BJ (cell line): ENCODE measurements at regions of chr3 and their contacts with region 1.

Region 1: DNA sequence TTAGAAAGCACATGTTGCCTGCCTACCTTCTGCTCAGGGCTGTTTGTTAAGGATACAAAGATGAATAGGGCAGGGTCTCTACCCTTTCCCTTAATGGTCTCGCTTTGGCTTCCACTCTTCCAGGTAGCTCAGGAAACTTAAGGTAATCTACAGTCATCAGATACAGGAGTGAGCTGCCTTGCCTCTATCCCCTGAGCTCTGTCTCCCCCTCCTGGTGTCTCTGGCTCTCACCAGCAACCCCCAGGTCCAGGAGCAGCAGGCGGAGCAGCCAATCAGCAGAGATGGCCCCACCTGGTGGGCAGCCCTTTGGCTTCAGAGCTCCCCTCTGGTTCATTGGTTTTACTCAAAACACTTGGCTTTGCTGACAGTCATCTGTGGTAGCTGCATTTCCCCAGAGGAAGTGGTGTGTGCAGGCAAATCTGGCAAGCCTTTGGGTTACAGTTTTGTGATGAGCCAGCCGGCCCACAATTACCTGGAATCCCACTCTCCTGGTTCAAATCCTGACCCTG is 8.5 kb upstream of the CX3CR1 start:
- DNase-seq: no peak
- H3K4me3 ChIP-seq: no peak overlapping the region
- H3K27me3 ChIP-seq: no peaks in the 10 kb centered on the region
- CTCF ChIP-seq: peak; percentile 95

Region 2: DNA sequence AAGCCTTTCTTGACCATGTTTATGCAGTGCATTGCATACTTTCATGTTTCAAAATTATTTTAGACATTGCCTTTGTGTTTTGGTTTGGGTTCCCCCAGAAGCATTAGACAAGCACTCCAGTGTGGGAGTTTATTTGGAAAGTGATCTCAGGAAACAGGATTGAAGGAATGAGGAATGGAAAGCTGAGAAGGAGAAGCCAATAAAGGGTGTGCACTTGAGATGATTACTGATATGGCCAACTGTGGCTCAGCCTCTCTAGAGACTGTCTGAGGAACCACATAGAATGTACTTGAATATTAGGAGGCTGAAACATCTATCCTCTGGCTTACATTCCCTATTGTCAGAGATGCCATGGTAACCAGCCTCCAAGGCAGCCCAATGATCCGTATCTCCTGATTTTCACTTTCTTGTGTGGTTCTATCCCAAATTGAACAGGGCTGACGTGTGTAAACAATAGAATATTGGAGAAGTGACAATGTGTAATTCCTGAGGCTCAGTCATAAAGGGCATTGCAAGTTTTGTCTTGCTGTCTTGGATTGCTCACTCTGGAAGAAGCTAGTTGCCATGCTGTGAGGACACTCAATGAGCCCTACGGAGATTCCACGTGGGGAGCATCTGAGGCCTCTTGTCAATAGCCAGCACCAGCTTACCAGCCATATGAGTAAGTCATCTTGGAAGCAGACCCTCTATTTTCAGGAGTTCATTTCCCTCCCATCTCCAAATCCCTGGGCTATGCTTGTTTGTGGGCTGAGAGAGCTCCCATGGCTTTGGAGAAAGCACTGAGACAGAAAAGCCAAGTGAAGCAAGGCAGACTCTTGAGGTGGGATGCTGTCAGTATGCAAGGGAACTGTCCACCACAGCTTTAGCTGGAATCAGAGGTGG is 321.3 kb before region 1 on chr3:
- CTCF ChIA-PET with region 1: no interaction called
- POLR2A ChIA-PET with region 1: no interaction called
- DNase-seq: no peak
- H3K4me3 ChIP-seq: no peak overlapping the region
- H3K27me3 ChIP-seq: peaks cover 2% of the 10 kb centered on the region
- CTCF ChIP-seq: no peak

Region 3: DNA sequence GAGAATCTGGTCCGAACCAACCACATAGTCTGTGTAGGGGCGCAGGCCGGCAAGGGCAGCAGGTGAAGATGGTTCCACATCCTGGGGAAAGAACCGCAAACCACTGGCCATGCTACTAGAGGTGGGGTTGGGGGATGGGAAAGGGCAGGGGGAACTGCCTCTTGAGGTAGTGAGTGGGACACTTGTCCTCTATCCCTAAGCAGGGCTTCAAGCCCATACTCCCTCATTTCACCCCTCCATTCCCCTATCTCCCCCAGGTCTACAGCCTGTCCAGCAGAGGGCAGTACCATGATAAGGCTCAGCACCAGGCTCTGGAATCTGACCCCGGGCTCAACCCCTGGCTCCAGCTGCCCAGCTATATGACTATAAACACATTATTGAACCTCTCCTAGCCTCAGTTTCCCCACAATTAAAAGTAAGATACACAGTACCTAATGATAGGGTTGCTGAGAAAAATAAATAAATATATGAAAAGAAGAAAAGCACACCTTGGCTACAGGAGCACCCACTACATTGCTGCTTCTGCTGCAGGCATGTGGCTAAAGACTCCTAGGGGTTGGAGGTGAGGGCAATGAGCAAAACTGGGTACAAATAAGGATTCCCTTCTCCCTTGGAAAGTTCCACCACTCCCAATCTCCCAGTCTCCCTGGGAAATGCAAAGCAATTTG is 187.2 kb before region 1 on chr3:
- CTCF ChIA-PET with region 1: interaction called, 15 read pairs
- POLR2A ChIA-PET with region 1: no interaction called
- DNase-seq: no peak
- H3K4me3 ChIP-seq: no peak overlapping the region
- H3K27me3 ChIP-seq: no peaks in the 10 kb centered on the region
- CTCF ChIP-seq: peak; percentile 78

Region 4: GRCh38 chr3:39126532-39127071 is 161.8 kb before region 1 on chr3:
- CTCF ChIA-PET with region 1: interaction called, 300 read pairs
- POLR2A ChIA-PET with region 1: no interaction called
- DNase-seq: no peak
- H3K4me3 ChIP-seq: no peak overlapping the region
- H3K27me3 ChIP-seq: no peaks in the 10 kb centered on the region
- CTCF ChIP-seq: peak; percentile 63

Region 5: DNA sequence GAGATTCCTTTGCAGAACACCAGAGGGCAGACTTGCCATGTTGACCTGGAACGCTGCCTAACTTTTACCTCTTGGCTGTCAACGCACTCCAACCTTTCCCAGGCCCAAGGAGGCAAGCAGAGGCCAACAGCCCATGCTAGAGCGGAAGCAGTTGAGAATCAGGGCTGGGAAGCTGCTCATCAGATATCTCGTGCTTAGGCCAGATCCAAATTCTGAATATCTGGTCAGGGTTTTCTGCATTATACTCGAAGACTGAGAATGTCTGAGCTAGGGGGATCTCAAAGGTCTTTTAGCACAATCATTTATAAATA is 98.4 kb before region 1 on chr3:
- CTCF ChIA-PET with region 1: interaction called, 374 read pairs
- POLR2A ChIA-PET with region 1: no interaction called
- DNase-seq: no peak
- H3K4me3 ChIP-seq: no peak overlapping the region
- H3K27me3 ChIP-seq: no peaks in the 10 kb centered on the region
- CTCF ChIP-seq: peak; percentile 77

Region 6: DNA sequence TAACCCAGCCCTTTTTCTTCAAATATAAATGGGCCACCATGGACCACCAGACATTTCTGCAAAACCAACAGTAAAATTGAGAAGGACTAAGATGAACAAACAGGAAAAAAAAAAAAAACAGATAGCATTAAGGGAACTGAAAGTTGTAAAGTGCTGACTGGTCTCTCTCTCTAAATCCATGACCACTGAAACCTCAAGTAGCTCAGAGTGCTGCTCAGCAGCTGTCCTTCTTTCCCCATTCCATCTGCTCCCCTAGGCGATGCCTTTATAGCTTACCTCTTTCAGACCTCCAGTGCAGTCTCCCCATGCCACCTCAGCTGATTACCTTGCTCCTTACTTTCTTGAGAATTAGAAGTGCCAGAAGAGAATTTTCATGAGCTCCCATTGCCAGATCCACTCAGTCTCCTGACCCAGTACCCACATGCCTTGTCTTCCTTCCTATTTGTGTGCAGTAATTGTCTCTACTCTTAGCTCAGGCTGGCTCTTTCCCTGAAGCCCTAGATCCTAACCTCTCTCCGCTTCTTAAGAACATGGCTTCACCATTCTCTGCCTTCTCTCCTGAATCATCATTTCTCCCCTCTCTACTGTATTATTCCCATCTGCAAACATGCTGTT is 72.1 kb before region 1 on chr3:
- CTCF ChIA-PET with region 1: interaction called, 124 read pairs
- POLR2A ChIA-PET with region 1: no interaction called
- DNase-seq: no peak
- H3K4me3 ChIP-seq: no peak overlapping the region
- H3K27me3 ChIP-seq: peaks cover 8% of the 10 kb centered on the region
- CTCF ChIP-seq: no peak

Region 7: DNA sequence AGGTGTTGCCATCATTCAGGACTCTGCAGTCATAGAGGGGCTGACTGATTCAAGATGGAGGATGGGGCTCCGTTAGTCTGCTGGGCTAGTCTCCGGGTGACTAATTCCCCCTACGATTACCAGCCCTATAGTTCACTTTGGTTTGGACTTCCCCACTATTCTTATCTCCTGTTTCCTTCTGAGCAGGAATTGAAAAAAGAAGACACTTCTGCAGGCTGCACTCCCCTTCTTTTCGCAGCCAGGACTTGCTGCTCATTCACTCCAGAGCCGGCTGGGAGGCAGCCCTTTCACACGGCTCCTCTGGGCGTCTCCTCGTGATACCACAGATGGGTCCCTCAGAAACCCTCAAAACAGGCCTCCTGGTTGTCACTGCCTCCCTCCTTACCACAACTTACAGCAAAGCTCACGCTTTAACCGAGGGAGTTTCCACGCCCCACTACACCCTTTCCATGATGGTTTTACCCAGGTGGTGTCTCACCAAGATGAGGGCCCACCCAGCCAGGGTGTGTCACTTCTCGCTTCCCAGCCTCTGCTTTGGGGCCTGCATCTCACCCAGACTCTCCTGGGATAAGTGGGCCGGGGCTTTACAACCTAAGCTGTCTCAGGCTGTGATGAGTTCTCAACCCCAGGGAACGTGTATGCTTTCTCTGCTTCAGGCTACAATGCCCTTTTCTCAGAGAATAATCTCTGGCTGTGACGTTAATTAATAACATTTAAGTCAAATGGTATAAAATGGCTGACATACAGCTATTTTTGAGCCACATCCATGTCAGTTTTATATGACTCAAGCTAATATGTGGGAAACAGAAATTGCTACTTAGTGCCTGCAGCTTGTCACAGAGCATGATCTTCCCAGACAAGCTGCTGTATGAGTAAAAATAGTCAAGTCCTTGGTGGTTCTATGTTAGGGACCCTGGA is 20.5 kb before region 1 on chr3:
- CTCF ChIA-PET with region 1: interaction called, 62 read pairs
- POLR2A ChIA-PET with region 1: no interaction called
- DNase-seq: no peak
- H3K4me3 ChIP-seq: no peak overlapping the region
- H3K27me3 ChIP-seq: peaks cover 16% of the 10 kb centered on the region
- CTCF ChIP-seq: no peak

Region 8: DNA sequence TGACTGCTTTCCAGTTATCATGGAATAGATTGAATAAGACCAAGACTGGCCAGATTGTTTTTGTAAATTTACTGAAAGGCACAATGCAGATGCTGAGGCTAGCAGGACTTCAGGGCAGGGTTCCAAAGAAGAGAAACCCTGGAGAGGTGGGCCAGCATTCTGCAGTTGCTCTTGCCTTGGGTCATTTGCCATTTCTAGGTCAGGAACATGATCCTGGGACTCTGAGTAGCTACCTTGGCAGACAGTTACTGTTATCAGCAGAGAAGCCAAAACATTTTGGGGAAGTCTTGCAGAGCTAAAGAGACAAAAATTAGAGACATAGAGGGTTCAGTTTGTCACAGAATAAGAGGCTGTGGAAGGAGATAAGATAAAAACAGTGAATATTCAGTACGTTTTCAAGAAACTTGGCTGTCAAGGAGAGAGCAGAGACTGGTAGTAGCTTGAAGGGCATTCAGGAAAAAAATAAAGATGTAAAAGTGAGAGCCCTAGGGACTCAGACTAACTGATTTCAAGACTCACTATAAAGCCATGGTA is 474.2 kb after region 1 on chr3:
- CTCF ChIA-PET with region 1: no interaction called
- POLR2A ChIA-PET with region 1: no interaction called
- DNase-seq: no peak
- H3K4me3 ChIP-seq: no peak overlapping the region
- H3K27me3 ChIP-seq: no peaks in the 10 kb centered on the region
- CTCF ChIP-seq: no peak

Region 9: GRCh38 chr3:39970982-39971381 is 682.6 kb after region 1 on chr3:
- CTCF ChIA-PET with region 1: no interaction called
- POLR2A ChIA-PET with region 1: no interaction called
- DNase-seq: no peak
- H3K4me3 ChIP-seq: no peak overlapping the region
- H3K27me3 ChIP-seq: no peaks in the 10 kb centered on the region
- CTCF ChIP-seq: no peak